GM13977 (cell line): ENCODE measurements at regions of chr16 and their contacts with region 1.

Region 1: GRCh38 chr16:14562691-14563491 is 67.2 kb downstream of the PARN start:
- DNase-seq: no peak
- CTCF ChIP-seq: no peak

Region 2: DNA sequence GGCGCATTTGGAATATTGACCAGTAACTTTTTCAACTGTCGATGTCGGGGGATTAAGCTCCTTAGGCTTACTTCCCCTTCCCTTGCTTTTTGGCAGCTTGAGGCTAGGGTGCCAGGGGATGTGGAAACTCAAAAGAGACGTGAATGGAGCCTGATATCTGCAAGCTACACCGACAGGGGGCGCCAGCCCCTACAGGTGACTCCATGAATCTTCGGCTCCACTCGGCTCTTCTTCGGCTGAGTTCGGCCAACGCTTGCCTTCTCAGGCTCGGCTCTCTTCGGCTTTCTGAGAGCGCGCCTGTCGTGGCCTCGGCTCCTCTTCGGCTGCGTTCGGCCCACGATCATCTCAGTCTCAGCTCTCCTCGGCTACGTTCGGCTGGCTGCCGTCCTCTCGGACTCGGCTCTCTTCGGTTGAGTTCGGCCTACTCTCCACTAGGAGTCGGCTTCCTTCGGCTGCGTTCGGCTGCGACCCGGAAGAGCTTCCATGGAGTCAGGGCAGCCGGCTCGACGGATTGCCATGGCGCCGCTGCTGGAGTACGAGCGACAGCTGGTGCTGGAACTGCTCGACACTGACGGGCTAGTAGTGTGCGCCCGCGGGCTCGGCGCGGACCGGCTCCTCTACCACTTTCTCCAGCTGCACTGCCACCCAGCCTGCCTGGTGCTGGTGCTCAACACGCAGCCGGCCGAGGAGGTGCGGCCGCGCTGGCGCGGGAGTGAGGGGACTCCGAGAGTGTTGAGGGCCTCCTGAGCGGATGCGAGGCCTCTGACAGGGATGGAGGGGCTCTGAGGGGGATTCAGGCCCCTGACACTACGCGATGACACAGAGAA is 643.0 kb before region 1 on chr16 and contains the start of gene ERCC4:
- in situ Hi-C with region 1: loop called (anchors 25 kb)
- DNase-seq: peak; percentile 97
- CTCF ChIP-seq: peak; percentile 82

Region 3: GRCh38 chr16:14497245-14498082 is 65.4 kb before region 1 on chr16:
- in situ Hi-C with region 1: loop called (anchors 10 kb)
- DNase-seq: no peak
- CTCF ChIP-seq: no peak